ENCODE measurements at regions of chr9 and their contacts with region 1.

Region 1: DNA sequence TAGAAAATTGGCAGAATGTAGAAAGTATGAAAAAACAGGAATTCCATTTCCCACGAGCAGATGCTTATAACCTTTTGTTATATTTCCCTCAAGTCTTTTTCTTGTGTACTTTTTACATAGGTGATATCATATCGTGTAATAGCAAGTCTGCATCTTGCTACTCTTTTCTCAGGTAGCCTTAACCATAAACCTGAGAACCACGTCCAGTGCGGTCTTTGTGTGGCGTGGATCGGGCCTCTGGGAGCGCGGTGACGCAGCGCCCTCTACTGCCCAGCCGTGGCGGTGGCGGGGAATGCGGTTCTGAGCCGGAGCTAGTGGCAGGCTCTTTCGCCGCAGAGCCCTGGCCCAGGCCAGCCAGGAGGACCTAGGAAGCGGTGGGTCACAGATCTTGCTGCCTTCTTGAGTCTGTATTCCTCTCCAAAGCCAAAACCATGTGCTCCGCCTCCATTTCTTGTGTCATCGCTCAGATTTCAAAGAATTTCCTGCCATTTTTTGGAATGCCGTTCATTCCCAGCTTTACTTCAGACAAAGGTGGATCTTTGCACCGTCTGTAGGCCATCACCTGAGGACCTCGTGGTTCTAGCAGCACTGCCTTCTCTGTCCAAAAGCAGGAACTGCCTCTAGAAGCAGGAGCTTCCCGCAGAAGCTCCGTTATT is 71.9 kb downstream of the MVB12B start:
- DNase-seq: peak; percentile 76 to 98 (median 92)

Region 2: DNA sequence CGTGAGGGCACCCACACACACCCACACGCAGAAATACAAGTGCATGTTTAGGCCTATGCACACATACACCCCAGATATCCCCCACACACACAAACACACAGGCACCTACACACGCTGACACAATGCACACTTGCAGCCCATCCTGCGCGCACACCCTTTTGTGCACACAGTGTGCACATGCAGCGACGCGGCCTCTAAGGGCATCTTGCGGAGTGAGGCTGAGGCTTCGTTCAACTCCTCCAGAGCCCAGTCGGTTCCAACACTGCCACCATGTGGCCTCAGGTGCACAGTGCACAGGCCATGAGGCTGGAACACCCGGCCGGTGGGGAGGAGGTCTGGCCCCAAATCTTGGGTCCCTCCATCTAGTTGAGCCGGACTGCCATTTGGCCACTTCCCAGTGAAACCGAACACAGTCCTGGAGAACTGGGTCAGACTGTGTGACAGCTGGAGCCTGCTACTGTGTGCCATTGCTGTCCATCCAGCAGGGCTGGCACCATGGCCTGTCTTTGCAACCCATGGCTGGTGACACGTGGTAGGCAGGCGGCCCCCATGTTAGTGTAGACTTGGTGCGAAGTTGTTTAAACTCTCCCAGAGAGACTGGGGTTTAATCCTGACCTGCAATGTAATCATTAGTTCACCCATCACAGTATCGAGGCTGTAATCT is 169.6 kb before region 1 on chr9:
- intact Hi-C with region 1: loop called (anchors 5 kb)
- DNase-seq: peak; percentile 65 to 97 (median 82)

Region 3: DNA sequence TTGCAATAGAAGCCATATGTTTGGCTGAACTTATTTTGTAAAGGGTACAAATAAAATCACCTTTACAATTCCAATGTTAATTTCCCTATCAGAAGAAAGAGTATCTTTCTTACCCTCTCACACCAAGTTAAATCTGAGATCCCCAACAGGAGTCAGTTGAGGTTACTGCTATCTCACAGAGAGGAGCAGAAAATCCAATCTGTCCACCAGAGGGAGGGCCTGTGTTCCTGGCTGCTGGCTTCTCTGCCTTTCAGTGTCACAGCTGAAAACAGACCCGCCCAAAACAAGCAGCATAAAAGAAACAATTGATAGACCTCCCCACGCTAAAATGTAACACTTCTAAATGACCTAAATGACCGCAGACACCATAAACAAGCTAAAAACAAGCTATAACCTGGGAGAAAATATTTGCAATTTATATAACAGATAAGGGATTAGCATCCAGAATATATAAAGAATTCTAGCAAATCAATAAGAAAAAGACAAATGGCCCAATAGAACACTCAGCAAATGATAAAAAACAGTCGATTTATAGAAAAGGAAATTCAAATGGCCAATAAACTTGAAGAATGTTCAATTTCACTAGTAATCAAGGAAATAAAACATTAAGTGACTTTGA is 96.4 kb before region 1 on chr9:
- intact Hi-C with region 1: loop called (anchors 5 kb)
- DNase-seq: peak in 7 of 10 donors; percentile 54 to 94 (median 68)

Region 4: GRCh38 chr9:126317513-126317912 is 81.0 kb before region 1 on chr9:
- intact Hi-C with region 1: loop called (anchors 5 kb)
- DNase-seq: peak in 2 of 10 donors; percentile 25 to 82

Region 5: DNA sequence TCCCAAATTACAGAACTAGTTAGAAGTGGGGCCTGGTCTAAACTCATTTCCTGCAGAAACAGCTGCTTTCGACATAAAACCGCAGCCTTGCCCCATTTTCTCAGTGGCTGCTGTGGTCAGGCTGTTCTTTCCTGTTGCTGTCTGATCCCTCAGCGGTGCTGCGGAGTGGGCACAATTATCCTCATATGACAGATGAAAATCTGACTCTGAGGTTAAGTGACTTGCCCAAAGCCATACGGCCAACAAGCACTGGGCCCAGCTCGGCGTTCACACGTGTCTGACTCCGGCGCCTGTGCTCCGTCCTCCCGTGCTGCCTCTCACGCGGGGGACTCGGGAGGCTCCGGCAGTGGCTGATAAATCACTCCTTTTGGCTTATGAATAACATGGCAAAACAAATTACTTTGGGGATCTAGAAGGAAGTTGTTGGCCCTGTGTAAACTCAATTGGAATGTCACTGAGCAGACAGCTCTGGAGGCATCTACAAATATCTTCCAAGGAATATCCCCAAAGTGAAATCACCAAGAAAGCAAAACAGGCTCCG is 72.6 kb after region 1 on chr9:
- intact Hi-C with region 1: no loop called
- DNase-seq: peak in 5 of 10 donors; percentile 23 to 81 (median 58)

Region 6: DNA sequence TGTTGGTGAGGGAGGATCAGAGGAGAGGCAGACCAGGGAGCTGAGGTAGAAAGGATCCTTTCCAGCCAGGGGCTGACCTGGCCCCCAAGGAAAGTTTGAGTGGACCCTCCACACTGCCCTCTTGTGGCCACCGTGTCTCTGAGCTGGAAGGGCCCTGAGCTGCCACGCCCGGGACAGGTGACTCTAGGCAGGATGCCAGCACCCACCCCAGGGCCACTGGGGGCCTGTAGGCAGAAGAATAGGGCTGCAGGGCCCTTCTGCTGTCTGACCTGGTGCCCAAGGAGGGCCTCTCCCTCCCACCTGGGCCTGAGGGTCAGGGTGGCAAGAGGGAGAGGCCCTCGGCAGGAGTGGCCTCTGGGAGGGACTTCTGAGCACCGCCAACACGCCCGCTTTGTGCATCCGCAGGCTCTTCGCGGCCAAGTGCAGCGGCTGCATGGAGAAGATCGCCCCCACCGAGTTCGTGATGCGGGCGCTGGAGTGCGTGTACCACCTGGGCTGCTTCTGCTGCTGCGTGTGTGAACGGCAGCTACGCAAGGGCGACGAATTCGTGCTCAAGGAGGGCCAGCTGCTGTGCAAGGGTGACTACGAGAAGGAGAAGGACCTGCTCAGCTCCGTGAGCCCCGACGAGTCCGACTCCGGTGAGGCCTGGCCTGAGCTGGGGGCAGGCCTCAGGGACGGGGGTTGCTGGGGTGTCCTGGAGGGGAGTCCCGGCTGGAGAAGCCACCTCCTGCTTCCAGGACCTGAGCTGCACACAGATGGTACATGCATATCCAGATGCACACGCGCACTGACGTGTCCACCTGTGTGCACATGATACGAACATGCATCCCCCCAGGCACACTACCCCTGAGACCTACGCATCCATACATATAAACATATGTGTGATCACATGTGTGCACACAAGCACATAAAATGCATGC is 292.2 kb after region 1 on chr9:
- intact Hi-C with region 1: no loop called
- DNase-seq: peak in 5 of 10 donors; percentile 28 to 82 (median 68)